Caco-2 (cell line): ENCODE measurements at regions of chr16 and their contacts with region 1.

Region 1: DNA sequence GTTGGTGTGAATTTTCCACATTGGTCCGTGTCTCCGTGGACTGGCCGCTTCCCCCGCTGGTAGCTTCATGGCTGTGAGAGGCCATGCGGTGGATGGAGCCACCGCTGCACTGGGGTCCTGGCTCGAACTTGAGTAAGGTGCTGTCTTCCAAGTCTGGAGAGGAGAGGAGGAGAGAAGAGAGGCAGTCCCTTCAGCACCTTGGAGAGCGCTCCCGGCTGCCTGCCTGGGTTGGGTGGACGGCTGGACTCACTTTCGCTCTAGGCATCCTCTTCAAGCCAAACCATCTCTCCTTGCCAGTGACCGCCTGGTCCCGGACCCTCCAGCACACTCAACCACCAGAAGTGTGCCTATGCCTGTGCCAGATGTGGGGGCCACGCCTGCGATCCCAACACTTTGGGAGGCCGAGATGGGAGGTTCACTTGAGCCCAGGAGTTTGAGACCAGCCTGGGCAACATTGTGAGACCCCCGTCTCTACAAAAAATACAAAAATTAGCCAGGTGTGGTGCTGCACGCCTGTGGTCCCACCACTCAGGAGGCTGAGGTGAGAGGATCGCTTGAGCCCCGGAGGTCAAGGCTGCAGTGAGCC is 6.2 kb downstream of the JPH3 start:
- DNase-seq: peak; percentile 83 to 89
- H3K4me3 ChIP-seq: no peak overlapping the region
- H3K4me3 Mint-ChIP-seq: no peak overlapping the region
- H3K27ac Mint-ChIP-seq: no peak overlapping the region
- H3K4me1 ChIP-seq: peaks cover 4% of the 10 kb centered on the region; the same call in 1 of the 2 replicates
- H3K4me1 Mint-ChIP-seq: no peaks in the 10 kb centered on the region
- H3K27me3 ChIP-seq: peaks cover 5% of the 10 kb centered on the region
- H3K27me3 Mint-ChIP-seq: peaks cover 18% of the 10 kb centered on the region
- CTCF ChIP-seq: no peak

Region 2: GRCh38 chr16:87661561-87661960 is 53.1 kb after region 1 on chr16:
- CTCF ChIA-PET with region 1: interaction called, 3 read pairs
- POLR2A ChIA-PET with region 1: no interaction called
- intact Hi-C with region 1: loop called (anchors 1 kb)
- DNase-seq: peak; percentile 73 to 82
- H3K4me3 ChIP-seq: no peak overlapping the region
- H3K4me3 Mint-ChIP-seq: no peak overlapping the region
- H3K27ac Mint-ChIP-seq: no peak overlapping the region
- H3K4me1 ChIP-seq: no peaks in the 10 kb centered on the region
- H3K4me1 Mint-ChIP-seq: no peaks in the 10 kb centered on the region
- H3K27me3 ChIP-seq: no peaks in the 10 kb centered on the region
- H3K27me3 Mint-ChIP-seq: peaks cover 18% of the 10 kb centered on the region
- CTCF ChIP-seq: no peak